ENCODE measurements at regions of chr2 and their contacts with region 1.

Region 1: GRCh38 chr2:135985018-135985825 is at the start of gene DARS1:
- DNase-seq: peak; percentile 59 to 91 (median 68)
- ATAC-seq: peak; percentile 82
- H3K4me3 ChIP-seq: peak within 1 kb of the TSS; percentile 84
- H3K4me3 Mint-ChIP-seq: peak within 1 kb of the TSS; percentile 99
- H3K27ac ChIP-seq: peak within 1 kb of the TSS; percentile 95 to 98
- H3K27ac Mint-ChIP-seq: peak within 1 kb of the TSS; percentile 99
- H3K4me1 ChIP-seq: peaks cover 7% of the 10 kb centered on the region
- H3K4me1 Mint-ChIP-seq: peaks cover 50% of the 10 kb centered on the region
- H3K27me3 ChIP-seq: no peaks in the 10 kb centered on the region
- H3K27me3 Mint-ChIP-seq: no peaks in the 10 kb centered on the region
- CTCF ChIP-seq: no peak
- total RNA-seq, gene DARS1: 38.2 to 41.7 TPM

Region 2: DNA sequence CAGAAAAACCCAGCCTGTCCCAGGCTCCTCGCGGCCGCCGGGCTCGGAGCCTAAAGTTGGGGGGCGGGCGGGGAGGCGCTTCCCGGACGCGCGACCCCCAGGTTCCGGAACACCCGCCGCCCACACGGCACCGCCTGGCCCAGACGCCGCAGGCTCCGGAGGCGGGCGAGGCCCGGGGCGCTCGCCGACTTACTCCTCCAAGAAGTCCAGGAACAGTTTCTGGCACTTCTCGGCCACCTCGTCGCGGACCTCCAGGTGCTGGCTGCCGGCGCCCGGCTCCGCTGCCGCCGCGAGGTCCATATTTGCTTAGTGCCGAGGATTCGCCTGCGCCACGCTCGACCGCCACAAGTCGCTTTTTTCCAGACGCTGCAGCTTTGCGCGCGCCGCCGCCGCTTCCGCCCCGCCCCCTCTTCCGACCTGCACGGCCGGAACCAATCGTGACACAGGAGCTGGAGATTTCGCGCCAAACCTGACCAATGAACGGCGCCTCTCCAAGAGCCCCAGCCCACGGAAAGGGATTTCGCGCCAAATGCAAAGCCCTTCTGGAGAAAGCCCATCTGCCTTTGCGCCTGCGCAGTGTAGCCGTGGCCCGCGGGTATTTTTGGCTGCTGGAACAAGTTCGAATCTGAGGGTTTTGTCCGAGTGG is 109.0 kb before region 1 on chr2 and contains the start of gene MCM6:
- CTCF ChIA-PET with region 1: no interaction called
- POLR2A ChIA-PET with region 1: interaction called, 6 read pairs
- intact Hi-C with region 1: loop called in 1 of 2 experiments (anchors 5 kb)
- DNase-seq: peak; percentile 94 to 100 (median 96)
- ATAC-seq: peak; percentile 89
- H3K4me3 ChIP-seq: peak within 1 kb of the TSS; percentile 94
- H3K4me3 Mint-ChIP-seq: peak within 1 kb of the TSS; percentile 97
- H3K27ac ChIP-seq: peak within 1 kb of the TSS; percentile 76 to 83
- H3K27ac Mint-ChIP-seq: peak within 1 kb of the TSS; percentile 99
- H3K4me1 ChIP-seq: peaks cover 19% of the 10 kb centered on the region
- H3K4me1 Mint-ChIP-seq: peaks cover 48% of the 10 kb centered on the region
- H3K27me3 ChIP-seq: no peaks in the 10 kb centered on the region
- H3K27me3 Mint-ChIP-seq: no peaks in the 10 kb centered on the region
- CTCF ChIP-seq: no peak
- total RNA-seq, gene MCM6: 31.5 to 34.4 TPM

Region 3: GRCh38 chr2:135960656-135961551 is 24.3 kb before region 1 on chr2:
- CTCF ChIA-PET with region 1: no interaction called
- POLR2A ChIA-PET with region 1: interaction called, 15 read pairs
- intact Hi-C with region 1: loop called (anchors 2 kb)
- DNase-seq: peak in 8 of 14 experiments; percentile 7 to 61 (median 28)
- ATAC-seq: peak; percentile 81
- H3K4me3 ChIP-seq: peak overlapping the region; percentile 6
- H3K4me3 Mint-ChIP-seq: peak overlapping the region; percentile 65
- H3K27ac ChIP-seq: peak overlapping the region; percentile 56 to 58
- H3K27ac Mint-ChIP-seq: peak overlapping the region; percentile 92
- H3K4me1 ChIP-seq: peaks cover 18% of the 10 kb centered on the region
- H3K4me1 Mint-ChIP-seq: peaks cover 63% of the 10 kb centered on the region
- H3K27me3 ChIP-seq: no peaks in the 10 kb centered on the region
- H3K27me3 Mint-ChIP-seq: no peaks in the 10 kb centered on the region
- CTCF ChIP-seq: no peak

Region 4: GRCh38 chr2:136065907-136066306 is 80.7 kb after region 1 on chr2:
- CTCF ChIA-PET with region 1: no interaction called
- POLR2A ChIA-PET with region 1: no interaction called
- intact Hi-C with region 1: no loop called
- DNase-seq: no peak
- ATAC-seq: no peak
- H3K4me3 ChIP-seq: no peak overlapping the region
- H3K4me3 Mint-ChIP-seq: no peak overlapping the region
- H3K27ac ChIP-seq: no peak overlapping the region
- H3K27ac Mint-ChIP-seq: no peak overlapping the region
- H3K4me1 ChIP-seq: peaks cover 25% of the 10 kb centered on the region
- H3K4me1 Mint-ChIP-seq: peaks cover 58% of the 10 kb centered on the region
- H3K27me3 ChIP-seq: no peaks in the 10 kb centered on the region
- H3K27me3 Mint-ChIP-seq: no peaks in the 10 kb centered on the region
- CTCF ChIP-seq: no peak

Region 5: GRCh38 chr2:136112317-136113208 is 127.3 kb after region 1 on chr2:
- CTCF ChIA-PET with region 1: no interaction called
- POLR2A ChIA-PET with region 1: interaction called, 6 read pairs
- intact Hi-C with region 1: loop called (anchors 2 to 5 kb)
- DNase-seq: peak in 3 of 14 experiments; percentile 28 to 57 (median 44)
- ATAC-seq: no peak
- H3K4me3 ChIP-seq: no peak overlapping the region
- H3K4me3 Mint-ChIP-seq: peak overlapping the region; percentile 99
- H3K27ac ChIP-seq: no peak overlapping the region
- H3K27ac Mint-ChIP-seq: peak overlapping the region; percentile 97
- H3K4me1 ChIP-seq: peaks cover 19% of the 10 kb centered on the region
- H3K4me1 Mint-ChIP-seq: peaks cover 44% of the 10 kb centered on the region
- H3K27me3 ChIP-seq: no peaks in the 10 kb centered on the region
- H3K27me3 Mint-ChIP-seq: peaks cover 14% of the 10 kb centered on the region
- CTCF ChIP-seq: no peak

Region 6: GRCh38 chr2:136129601-136130000 is 144.4 kb after region 1 on chr2:
- CTCF ChIA-PET with region 1: no interaction called
- POLR2A ChIA-PET with region 1: interaction called, 10 read pairs
- intact Hi-C with region 1: no loop called
- DNase-seq: peak in 8 of 14 experiments; percentile 32 to 91 (median 62)
- ATAC-seq: peak; percentile 41
- H3K4me3 ChIP-seq: no peak overlapping the region
- H3K4me3 Mint-ChIP-seq: peak overlapping the region; percentile 77
- H3K27ac ChIP-seq: peak overlapping the region; percentile 94 to 99
- H3K27ac Mint-ChIP-seq: peak overlapping the region; percentile 97
- H3K4me1 ChIP-seq: peaks cover 100% of the 10 kb centered on the region
- H3K4me1 Mint-ChIP-seq: peaks cover 96% of the 10 kb centered on the region
- H3K27me3 ChIP-seq: no peaks in the 10 kb centered on the region
- H3K27me3 Mint-ChIP-seq: no peaks in the 10 kb centered on the region
- CTCF ChIP-seq: no peak

Region 7: DNA sequence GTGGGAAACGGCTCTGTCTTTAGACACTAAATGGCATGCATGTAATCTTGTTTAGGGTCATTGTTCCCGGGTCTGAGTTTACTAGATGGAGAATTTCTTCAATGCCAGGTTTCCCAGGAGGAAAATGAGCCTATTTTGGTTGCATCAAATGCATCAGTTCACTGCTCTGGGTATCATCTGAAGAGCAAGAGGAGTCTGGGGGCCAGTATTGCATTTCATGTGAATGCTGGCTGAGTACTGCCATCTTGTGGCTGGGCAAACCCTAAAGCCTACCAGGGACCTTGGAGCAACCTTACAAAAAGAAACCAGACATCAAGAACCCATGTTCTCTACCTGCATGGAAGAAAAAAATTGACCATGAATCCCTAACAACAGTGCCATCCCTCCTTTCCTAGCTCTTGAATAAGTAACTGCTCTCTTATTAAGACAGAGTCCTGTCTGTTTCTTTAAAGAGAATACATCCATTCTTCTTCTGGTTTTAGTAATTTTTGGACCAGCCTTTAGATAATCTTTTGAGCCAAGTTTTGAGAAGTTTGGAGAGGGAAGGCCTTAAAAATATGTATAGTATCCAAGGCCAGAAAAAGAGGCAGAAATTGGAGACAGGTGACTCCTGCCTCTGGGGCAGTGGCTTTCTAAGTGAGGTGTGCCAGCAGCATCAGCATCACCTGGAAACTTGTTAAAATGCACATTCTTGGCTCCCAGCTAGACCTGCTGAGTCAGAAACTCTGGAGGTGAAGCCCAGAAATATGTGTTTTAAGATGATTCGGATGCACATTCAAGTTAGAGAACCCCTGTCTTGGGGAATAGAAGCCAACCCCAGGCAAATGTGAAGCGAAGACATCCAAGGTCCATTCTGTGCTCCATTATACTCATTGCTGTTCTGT is 393.7 kb after region 1 on chr2:
- CTCF ChIA-PET with region 1: no interaction called
- POLR2A ChIA-PET with region 1: interaction called, 8 read pairs
- intact Hi-C with region 1: loop called (anchors 1 to 5 kb)
- DNase-seq: peak; percentile 63 to 88 (median 76)
- ATAC-seq: peak; percentile 35
- H3K4me3 ChIP-seq: no peak overlapping the region
- H3K4me3 Mint-ChIP-seq: peak overlapping the region; percentile 31
- H3K27ac ChIP-seq: no peak overlapping the region
- H3K27ac Mint-ChIP-seq: peak overlapping the region; percentile 80
- H3K4me1 ChIP-seq: peaks cover 43% of the 10 kb centered on the region
- H3K4me1 Mint-ChIP-seq: peaks cover 72% of the 10 kb centered on the region
- H3K27me3 ChIP-seq: no peaks in the 10 kb centered on the region
- H3K27me3 Mint-ChIP-seq: no peaks in the 10 kb centered on the region
- CTCF ChIP-seq: peak; percentile 78